Mammary epithelial cell (primary cell): ENCODE measurements at regions of chr5 and their contacts with region 1.

Region 1: DNA sequence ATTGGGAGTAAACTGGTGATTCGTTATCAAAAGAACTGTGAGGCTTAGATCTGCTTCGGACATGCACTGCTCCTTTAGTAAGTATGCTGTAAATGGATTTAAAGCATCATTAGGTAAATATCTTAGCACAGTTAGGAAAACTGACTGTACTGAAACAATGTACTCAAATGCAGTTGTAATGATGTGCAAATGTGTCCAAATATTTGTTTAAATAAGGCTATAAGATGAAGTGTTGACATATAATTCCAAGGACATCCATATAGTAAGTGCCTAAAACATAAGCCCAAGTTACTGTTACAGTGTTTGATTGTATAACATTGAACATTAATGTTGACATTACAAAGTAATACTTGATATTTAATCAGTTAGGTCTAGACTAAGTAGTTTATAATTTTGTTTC is 512.5 kb upstream of the CDH18 start:
- DNase-seq: no peak
- H3K4me3 ChIP-seq: no peak overlapping the region
- H3K27ac ChIP-seq: no peak overlapping the region
- H3K4me1 ChIP-seq: no peaks in the 10 kb centered on the region
- H3K27me3 ChIP-seq: no peaks in the 10 kb centered on the region
- CTCF ChIP-seq: no peak

Region 2: DNA sequence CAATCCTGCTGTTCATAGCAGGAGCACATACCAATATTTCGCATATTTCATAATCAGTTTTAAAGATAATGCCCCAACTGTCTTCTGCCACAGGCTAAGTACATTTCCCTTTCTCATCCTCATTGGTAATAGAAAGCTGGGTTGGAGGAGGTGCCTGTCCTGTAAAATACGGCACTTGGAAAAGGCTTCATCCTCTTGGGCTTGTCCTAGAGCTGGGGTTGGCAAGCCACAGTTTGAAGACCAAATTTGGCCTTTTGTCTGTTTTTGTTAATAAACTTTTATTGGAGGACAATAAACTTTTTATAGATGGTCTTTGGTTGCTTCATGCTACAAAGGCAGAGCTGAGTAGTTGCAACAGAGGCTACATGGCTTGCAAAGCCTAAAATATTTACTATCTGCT is 485.2 kb after region 1 on chr5:
- CTCF ChIA-PET with region 1: interaction called, 16 read pairs
- dilution Hi-C with region 1: no loop called
- in situ Hi-C with region 1: no loop called
- intact Hi-C with region 1: no loop called
- DNase-seq: no peak
- H3K4me3 ChIP-seq: no peak overlapping the region
- H3K27ac ChIP-seq: no peak overlapping the region
- H3K4me1 ChIP-seq: no peaks in the 10 kb centered on the region
- H3K27me3 ChIP-seq: no peaks in the 10 kb centered on the region
- CTCF ChIP-seq: no peak

Region 3: DNA sequence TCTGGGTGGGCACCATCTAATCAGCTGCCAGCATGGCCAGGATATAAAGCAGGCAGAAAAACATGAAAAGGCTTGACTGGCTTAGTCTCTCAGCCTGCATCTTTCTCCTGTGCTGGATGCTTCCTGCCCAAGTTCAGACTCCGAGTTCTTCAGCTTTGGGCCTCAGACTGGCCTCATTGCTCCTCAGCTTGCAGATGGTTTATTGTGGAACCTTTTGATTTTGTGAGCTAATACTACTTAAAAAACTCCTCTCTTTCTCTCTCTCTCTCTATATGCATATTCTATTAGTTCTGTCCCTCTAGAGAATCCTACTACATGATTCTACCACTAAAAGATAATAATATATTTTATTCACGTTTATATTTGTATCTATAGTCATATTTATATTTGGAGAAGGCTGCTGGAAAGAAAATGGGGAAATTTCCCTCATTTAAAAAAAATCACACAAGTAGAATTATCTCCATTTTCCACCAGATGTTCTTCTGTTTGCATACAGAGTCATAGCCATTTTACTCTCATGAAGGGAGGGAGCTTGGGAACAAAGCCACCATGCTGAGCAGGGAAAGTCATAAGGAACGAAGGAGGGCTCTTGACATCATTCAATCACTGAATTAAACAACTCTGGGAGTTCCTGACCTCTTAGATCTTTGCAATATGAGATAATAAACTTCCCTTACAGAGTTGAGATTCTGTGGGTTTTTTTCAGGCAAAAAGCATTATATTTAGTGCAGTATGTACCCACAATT is 624.9 kb after region 1 on chr5:
- CTCF ChIA-PET with region 1: no interaction called
- dilution Hi-C with region 1: no loop called
- in situ Hi-C with region 1: no loop called
- intact Hi-C with region 1: no loop called
- DNase-seq: no peak
- H3K4me3 ChIP-seq: no peak overlapping the region
- H3K27ac ChIP-seq: no peak overlapping the region
- H3K4me1 ChIP-seq: no peaks in the 10 kb centered on the region
- H3K27me3 ChIP-seq: peaks cover 2% of the 10 kb centered on the region
- CTCF ChIP-seq: no peak